Right ventricle myocardium superior (tissue), 1 donor: ENCODE measurements at regions of chr5 and their contacts with region 1.

Region 1: DNA sequence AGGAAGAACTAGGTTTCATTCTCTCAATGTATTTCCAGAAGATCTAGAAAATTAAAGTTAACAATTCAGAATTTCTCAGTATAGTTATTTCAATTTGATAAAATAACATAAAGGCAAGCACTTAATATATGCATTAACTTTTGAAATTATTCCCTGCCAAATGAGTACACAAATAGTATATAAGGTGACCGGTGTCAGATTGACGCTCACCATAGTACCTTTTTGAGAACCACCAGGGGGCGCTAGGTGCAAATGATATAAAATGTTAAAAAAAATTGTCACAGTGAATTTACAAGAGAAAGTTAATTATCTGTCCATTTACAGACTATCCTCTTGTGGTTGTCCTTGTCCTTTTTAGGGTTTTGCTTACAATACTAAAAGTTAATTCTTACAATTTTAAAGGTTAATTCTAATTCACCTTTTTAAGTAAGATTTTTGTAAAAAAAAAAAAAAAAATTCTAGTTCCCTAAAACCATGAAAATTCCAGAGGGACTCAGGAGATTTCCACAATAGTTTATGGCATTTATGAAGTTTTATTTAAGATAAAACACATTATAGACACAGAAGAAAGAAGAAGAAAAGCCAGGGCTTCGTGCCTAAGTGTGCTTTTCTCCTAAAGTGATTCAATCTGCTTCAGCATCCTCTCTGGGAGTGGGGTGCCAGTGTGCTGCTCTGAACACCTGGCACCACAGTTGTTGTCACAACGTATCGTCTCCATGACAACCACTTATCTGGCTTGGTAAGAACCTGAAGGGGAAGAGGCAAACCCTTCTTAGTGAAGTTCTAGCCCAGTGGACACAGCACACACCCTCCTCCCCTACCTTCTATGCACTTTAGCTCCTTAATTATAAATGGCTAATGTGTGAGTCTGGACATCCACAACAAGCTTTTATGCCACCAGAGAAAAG is 1.7 kb downstream of the ADAMTS16 start:
- DNase-seq: no peak
- ATAC-seq: peak; percentile 62

Region 2: GRCh38 chr5:5063533-5063953 is 78.3 kb before region 1 on chr5:
- intact Hi-C with region 1: no loop called
- DNase-seq: no peak
- ATAC-seq: no peak

Region 3: GRCh38 chr5:5183189-5183699 is 41.4 kb after region 1 on chr5:
- intact Hi-C with region 1: no loop called
- DNase-seq: no peak
- ATAC-seq: no peak

Region 4: GRCh38 chr5:5270958-5271605 is 129.2 kb after region 1 on chr5:
- intact Hi-C with region 1: no loop called
- DNase-seq: peak; percentile 81
- ATAC-seq: peak; percentile 81

Region 5: GRCh38 chr5:5398046-5398445 is 256.2 kb after region 1 on chr5:
- intact Hi-C with region 1: loop called (anchors 5 kb)
- DNase-seq: no peak
- ATAC-seq: no peak

Region 6: GRCh38 chr5:5419294-5420210 is 277.7 kb after region 1 on chr5:
- intact Hi-C with region 1: loop called (anchors 5 kb)
- DNase-seq: no peak
- ATAC-seq: no peak

Region 7: GRCh38 chr5:5699062-5699461 is 557.2 kb after region 1 on chr5:
- intact Hi-C with region 1: no loop called
- DNase-seq: no peak
- ATAC-seq: no peak